Dorsolateral prefrontal cortex (tissue), 120 donors: ENCODE measurements at regions of chr2 and their contacts with region 1.

Region 1: GRCh38 chr2:118003396-118003824 is 10.5 kb downstream of the CCDC93 start:
- DNase-seq: peak in 3 of 10 donors; percentile 16 to 58 (median 43)
- H3K4me3 ChIP-seq: no peak overlapping the region
- H3K27ac ChIP-seq: no peak overlapping the region
- H3K27me3 ChIP-seq: no peaks in the 10 kb centered on the region
- CTCF ChIP-seq: peak; percentile 76 to 97 (median 91)

Region 2: DNA sequence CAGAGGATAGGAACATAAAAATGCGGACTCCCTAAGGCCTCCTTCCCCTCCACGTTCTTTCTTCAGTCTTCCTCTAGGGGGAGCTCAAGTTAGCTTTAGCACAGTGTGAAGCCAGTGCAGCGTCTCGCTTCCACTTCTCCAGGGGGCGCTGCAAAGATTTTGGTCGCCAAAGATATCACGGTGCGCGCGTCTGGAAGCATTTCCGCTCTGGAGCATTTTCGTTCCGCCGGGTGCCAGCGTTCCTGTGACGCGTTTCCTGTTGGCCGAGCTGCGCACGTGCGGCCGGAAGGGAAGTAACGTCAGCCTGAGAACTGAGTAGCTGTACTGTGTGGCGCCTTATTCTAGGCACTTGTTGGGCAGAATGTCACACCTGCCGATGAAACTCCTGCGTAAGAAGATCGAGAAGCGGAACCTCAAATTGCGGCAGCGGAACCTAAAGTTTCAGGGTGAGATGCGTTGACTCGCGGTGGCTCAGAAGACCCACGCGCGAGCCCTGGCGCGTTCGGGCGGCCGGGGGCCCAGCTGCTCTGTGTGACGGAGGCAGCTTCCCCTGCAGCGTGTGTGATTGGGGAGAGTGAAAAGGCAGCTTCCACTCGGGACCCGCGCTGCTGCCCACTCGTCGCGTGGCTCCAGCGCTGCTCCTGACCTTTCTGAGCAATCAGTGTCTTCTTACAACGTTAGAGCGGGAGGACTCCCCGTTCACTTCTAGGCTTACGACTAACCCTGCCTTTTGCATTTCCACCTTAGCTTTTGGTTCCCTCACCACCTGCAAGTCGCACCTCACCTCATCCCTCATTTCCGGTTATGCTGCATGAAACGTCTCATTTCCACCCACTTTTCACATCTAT is 188.8 kb before region 1 on chr2 and contains the start of gene DDX18:
- intact Hi-C with region 1: loop called in 1 of 2 experiments (anchors 5 kb)
- DNase-seq: peak; percentile 94 to 98 (median 97)
- H3K4me3 ChIP-seq: peak within 1 kb of the TSS; percentile 60 to 100 (median 92)
- H3K27ac ChIP-seq: peak within 1 kb of the TSS in 56 of 59 donors; percentile 29 to 91 (median 76)
- H3K27me3 ChIP-seq: no peaks in the 10 kb centered on the region
- CTCF ChIP-seq: peak; percentile 98 to 100 (median 100)
- total RNA-seq, gene DDX18: 22.2 to 51.3 (median 39.9) TPM

Region 3: DNA sequence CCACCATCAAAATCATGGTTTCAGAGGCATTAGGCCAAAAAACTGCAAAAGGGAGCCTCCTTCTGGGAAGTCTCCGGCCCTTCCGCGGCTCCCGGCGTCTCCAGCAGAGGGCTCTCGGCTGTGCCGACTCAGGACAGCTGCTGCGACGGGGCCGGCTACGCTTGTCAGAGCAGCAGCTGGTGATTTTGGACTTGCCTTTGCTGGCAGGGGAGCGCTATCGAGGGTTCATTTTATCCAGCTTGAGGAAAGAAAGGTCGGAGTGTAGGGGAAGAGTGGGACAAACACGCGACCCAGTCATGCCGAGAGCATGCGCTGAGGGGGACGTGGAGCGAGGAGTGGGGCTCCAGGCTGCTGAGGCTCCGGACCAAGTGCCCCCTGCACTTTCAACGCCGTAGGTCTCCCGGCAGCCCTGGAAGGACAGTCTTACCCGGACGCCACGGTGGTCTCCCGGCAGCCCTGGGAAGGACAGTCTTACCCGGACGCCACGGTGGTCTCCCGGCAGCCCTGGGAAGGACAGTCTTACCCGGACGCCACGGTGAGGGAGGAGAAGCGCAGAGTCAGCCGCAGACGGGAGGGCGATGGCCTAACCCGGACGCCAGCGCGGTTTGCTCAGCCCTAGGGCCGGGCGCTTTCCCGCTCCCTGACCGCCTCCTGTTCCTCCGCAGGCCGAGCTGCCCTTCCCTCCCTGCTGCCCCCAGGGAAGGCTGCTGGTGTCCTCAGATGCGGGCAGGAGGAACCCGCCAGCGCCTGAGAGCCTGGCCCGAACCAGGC is 167.2 kb before region 1 on chr2:
- intact Hi-C with region 1: loop called (anchors 2 to 5 kb)
- DNase-seq: peak; percentile 60 to 87 (median 84)
- H3K4me3 ChIP-seq: peak overlapping the region; percentile 9 to 65 (median 48)
- H3K27ac ChIP-seq: peak overlapping the region in 3 of 59 donors; percentile 21 to 46 (median 39)
- H3K27me3 ChIP-seq: no peaks in the 10 kb centered on the region
- CTCF ChIP-seq: peak; percentile 45 to 86 (median 76)

Region 4: GRCh38 chr2:117958186-117958585 is 45.2 kb before region 1 on chr2:
- intact Hi-C with region 1: loop called in 1 of 2 experiments (anchors 5 kb)
- DNase-seq: no peak
- H3K4me3 ChIP-seq: no peak overlapping the region
- H3K27ac ChIP-seq: no peak overlapping the region
- H3K27me3 ChIP-seq: no peaks in the 10 kb centered on the region
- CTCF ChIP-seq: no peak